GM23248 (cell line): ENCODE measurements at regions of chr4 and their contacts with region 1.

Region 1: DNA sequence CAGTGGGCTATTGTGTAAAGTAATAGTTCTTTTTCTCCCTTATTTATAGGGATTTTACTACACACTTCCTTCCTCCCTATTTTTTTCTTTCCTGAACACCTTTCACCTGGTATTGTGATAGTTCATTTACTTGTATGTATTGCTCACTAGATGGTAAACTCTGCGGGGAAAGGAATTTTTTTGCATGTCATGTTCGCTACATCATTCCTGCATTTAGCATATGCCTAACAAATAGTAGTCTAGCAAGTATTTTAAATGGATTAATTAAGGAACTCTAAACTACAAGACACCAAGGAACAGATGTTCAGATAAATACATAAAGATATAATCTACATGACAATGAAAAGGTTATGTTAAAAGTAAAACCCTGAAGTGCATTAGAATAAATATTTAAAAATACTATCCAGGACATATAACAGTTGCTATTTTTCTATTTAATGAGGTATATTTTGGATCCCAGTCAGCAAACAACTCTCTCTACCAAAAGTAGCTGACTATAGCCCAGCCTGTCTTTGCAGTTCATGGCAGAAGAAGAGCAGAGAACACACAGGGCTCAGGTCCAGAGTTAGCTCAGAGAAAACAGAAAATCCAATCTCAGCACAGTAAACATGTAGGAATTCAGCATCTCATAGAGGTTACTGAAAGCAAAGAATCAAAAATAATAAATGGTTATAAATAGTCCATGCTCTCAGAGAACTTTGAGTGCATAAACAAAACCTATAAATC is 87.8 kb downstream of the PACRGL start:
- DNase-seq: no peak
- H3K4me3 ChIP-seq: no peak overlapping the region
- H3K27ac ChIP-seq: no peak overlapping the region
- H3K4me1 ChIP-seq: no peaks in the 10 kb centered on the region
- H3K27me3 ChIP-seq: no peaks in the 10 kb centered on the region

Region 2: DNA sequence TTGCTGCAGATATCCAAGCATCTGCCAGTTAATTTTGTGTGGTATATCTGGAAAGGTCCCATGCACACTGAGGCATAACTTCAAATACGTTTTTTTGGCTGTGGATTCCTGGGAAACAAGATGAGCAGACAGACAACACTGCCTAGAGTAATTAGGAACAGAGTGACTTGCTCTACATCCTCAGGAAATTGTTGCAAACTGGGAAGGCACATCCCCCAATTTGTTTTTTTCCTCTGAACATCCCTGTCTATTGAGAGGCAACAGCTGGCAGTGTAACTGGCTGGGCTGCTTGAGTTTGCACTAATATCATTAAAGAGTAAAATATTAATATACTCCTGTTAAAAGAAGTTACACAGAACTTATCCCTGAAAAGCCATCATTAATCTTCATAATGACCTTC is 744.1 kb before region 1 on chr4:
- in situ Hi-C with region 1: no loop called
- DNase-seq: no peak
- H3K4me3 ChIP-seq: no peak overlapping the region
- H3K27ac ChIP-seq: no peak overlapping the region
- H3K4me1 ChIP-seq: peaks cover 24% of the 10 kb centered on the region
- H3K27me3 ChIP-seq: no peaks in the 10 kb centered on the region

Region 3: GRCh38 chr4:21012851-21013331 is 224.8 kb after region 1 on chr4:
- in situ Hi-C with region 1: no loop called
- DNase-seq: no peak
- H3K4me3 ChIP-seq: no peak overlapping the region
- H3K27ac ChIP-seq: no peak overlapping the region
- H3K4me1 ChIP-seq: no peaks in the 10 kb centered on the region
- H3K27me3 ChIP-seq: no peaks in the 10 kb centered on the region

Region 4: DNA sequence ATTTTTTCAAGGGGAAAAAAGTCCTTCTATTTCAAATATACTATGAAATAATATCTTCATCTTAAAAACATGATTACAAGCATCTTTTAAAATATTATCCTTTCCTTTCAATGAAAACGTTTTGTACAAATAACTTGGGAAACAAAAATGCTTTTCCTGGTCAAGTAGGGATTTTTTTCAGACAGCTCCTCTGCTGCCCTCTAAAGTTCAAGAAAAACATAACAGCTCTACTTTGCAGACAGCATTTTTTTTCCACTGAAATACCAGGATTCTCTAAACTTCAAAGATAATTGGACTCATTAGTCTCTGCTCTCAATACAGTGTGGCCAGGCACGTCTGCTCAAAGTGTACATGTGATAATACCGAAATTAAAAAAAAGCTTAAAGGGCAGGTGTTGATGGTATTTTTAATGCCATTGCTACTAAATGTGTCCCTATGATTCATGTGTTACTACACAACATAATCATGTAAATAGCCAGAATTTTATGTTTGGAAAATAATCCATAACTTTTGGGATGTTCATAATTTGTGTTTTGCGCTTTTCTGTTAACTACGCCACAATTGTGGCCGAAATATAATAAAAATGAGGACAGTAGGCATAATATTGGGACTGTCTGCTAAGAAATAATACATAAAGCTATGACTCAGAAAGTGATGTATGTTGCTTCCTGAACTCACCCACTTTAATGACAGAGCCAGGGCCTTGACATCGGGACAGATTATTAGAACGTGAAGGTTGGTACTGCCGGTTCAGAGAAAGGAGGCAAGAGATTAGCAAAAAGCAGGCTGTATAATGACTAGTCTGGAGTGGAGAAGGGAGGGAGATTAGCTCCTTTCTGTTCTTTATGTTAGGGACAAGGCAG is 681.6 kb after region 1 on chr4:
- in situ Hi-C with region 1: loop called (anchors 25 kb)
- DNase-seq: peak; percentile 51
- H3K4me3 ChIP-seq: no peak overlapping the region
- H3K27ac ChIP-seq: no peak overlapping the region
- H3K4me1 ChIP-seq: no peaks in the 10 kb centered on the region
- H3K27me3 ChIP-seq: peaks cover 39% of the 10 kb centered on the region